Dorsolateral prefrontal cortex (tissue), 120 donors: ENCODE measurements at regions of chr5 and their contacts with region 1.

Region 1: DNA sequence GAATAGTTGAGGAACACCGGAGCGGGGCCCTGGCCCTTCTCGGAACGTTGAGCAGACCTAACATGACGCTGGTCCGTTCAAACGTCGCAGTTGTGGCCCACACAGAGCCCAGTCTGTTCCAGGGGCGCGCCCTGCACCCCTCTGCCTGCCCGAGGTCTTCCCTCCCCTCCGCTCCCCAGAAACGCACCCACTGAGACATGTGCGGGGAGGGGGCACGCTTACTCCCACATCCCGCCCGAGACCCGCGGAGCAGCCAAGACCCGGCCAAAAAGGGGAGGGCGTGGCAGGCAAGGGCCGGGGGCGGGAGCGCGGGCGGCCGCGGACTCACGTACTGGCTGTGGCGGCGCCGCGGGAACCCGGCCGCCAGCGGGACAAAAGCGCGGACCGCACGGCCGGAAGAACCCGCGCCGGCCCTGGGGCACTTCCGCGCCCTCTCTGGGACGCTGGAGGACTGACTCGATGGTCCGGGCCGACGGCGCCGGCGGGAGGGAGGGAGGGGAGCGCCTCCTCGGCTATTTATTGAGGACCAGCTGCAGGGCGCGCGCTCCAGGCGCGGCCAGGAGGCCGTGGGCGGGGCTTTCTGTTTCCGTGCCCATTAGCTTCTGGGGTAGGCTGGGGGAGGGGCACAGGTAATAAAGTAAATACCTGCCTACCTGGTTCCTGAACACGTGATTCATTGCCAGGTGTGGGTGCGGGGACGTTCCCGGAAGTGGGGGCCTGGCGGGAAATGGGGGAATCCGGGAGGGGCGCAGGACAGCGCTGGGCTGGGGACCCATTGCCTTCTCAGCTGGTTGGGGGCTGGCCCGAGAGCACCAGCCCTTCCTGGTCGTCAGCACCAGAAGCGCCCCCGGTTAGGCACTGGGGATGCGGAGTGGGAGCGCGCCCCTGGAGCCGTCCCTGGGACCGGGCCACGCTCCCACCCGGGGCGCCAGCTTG is at the start of gene ZFP62:
- DNase-seq: peak; percentile 73 to 90 (median 88)
- H3K4me3 ChIP-seq: peak within 1 kb of the TSS; percentile 63 to 100 (median 94)
- H3K27ac ChIP-seq: peak within 1 kb of the TSS; percentile 27 to 94 (median 85)
- H3K27me3 ChIP-seq: no peaks in the 10 kb centered on the region
- CTCF ChIP-seq: peak in 31 of 56 donors; percentile 8 to 49 (median 28)
- total RNA-seq, gene ZFP62: 22.6 to 53.4 (median 34.2) TPM

Region 2: DNA sequence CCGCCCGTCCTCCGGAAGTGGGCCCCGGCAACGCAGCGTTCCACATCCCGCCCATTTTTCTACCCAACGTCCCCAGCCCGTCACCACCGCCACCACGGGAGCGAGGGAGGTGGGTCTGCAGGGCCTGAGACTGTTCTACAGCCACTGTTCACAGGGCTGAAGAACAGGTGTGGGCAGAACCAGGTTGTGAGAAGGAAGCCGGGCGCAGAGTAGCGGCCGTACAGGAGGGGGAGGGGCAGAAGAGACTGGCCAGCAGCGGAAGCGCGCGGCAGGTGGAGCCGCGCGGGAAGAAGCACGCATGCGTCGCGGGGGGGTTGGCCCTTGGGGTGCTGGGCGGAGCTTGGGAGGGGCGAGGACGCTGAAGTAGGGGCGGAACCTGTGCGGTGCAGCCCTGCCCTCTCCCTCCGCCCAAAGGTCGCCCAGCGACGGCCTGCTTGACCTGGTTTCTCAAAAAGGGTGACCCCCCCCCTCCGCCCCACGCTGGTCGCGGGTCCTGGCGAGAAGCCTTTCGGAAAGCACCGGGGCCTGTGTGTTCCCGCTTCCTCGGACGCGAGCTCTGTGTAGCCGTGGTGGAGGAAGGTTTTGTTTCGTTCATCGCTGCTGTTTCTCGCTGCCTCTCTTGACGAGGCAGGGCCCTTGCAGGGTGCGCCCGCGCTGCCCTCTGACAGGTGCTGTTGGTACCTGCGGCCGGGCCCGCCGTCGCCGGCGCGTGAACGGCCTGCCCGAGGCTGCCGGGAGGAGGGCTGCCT is 50.8 kb before region 1 on chr5:
- intact Hi-C with region 1: loop called (anchors 1 to 2 kb)
- DNase-seq: peak; percentile 91 to 97 (median 94)
- H3K4me3 ChIP-seq: peak overlapping the region; percentile 62 to 95 (median 84)
- H3K27ac ChIP-seq: peak overlapping the region; percentile 92 to 100 (median 99)
- H3K27me3 ChIP-seq: no peaks in the 10 kb centered on the region
- CTCF ChIP-seq: peak in 8 of 56 donors; percentile 0 to 25 (median 16)

Region 3: GRCh38 chr5:180831139-180832048 is 29.8 kb before region 1 on chr5:
- intact Hi-C with region 1: loop called in 1 of 2 experiments (anchors 1 kb)
- DNase-seq: peak; percentile 77 to 92 (median 86)
- H3K4me3 ChIP-seq: peak overlapping the region; percentile 74 to 99 (median 90)
- H3K27ac ChIP-seq: peak overlapping the region; percentile 86 to 100 (median 98)
- H3K27me3 ChIP-seq: no peaks in the 10 kb centered on the region
- CTCF ChIP-seq: peak in 49 of 56 donors; percentile 12 to 65 (median 44)

Region 4: GRCh38 chr5:180898621-180899246 is 37.6 kb after region 1 on chr5 and contains the start of gene BTNL8:
- intact Hi-C with region 1: no loop called
- DNase-seq: no peak
- H3K4me3 ChIP-seq: no peak within 1 kb of the TSS
- H3K27ac ChIP-seq: no peak within 1 kb of the TSS
- H3K27me3 ChIP-seq: no peaks in the 10 kb centered on the region
- CTCF ChIP-seq: no peak
- total RNA-seq, gene BTNL8: 0.26 to 1.2 (median 0.51) TPM in 45 of 120 experiments, not detected in the others

Region 5: GRCh38 chr5:181052672-181053487 is 191.7 kb after region 1 on chr5:
- intact Hi-C with region 1: no loop called
- DNase-seq: no peak
- H3K4me3 ChIP-seq: peak overlapping the region; percentile 31 to 70 (median 53)
- H3K27ac ChIP-seq: peak overlapping the region in 11 of 59 donors; percentile 12 to 69 (median 41)
- H3K27me3 ChIP-seq: peaks cover 5 to 96% (median 89%) of the 10 kb centered on the region in 45 donors
- CTCF ChIP-seq: no peak

Region 6: GRCh38 chr5:181159286-181159829 is 298.2 kb after region 1 on chr5:
- intact Hi-C with region 1: loop called in 1 of 2 experiments (anchors 10 kb)
- DNase-seq: peak; percentile 75 to 91 (median 90)
- H3K4me3 ChIP-seq: peak overlapping the region in 2 of 59 donors; percentile 1 to 20
- H3K27ac ChIP-seq: peak overlapping the region in 37 of 59 donors; percentile 57 to 97 (median 92)
- H3K27me3 ChIP-seq: peaks cover 0 to 7% (median 0%) of the 10 kb centered on the region in 45 donors
- CTCF ChIP-seq: peak; percentile 62 to 94 (median 86)

Region 7: GRCh38 chr5:181260387-181261319 is 399.5 kb after region 1 on chr5 and contains the start of gene TRIM52:
- intact Hi-C with region 1: loop called in 1 of 2 experiments (anchors 10 kb)
- DNase-seq: peak; percentile 84 to 95 (median 92)
- H3K4me3 ChIP-seq: peak within 1 kb of the TSS; percentile 64 to 100 (median 95)
- H3K27ac ChIP-seq: peak within 1 kb of the TSS; percentile 75 to 99 (median 94)
- H3K27me3 ChIP-seq: no peaks in the 10 kb centered on the region
- CTCF ChIP-seq: peak in 14 of 56 donors; percentile 10 to 37 (median 19)
- total RNA-seq, gene TRIM52: 19.8 to 50.9 (median 31.6) TPM